HCT116 (cell line): ENCODE measurements at regions of chr3 and their contacts with region 1.

Region 1: DNA sequence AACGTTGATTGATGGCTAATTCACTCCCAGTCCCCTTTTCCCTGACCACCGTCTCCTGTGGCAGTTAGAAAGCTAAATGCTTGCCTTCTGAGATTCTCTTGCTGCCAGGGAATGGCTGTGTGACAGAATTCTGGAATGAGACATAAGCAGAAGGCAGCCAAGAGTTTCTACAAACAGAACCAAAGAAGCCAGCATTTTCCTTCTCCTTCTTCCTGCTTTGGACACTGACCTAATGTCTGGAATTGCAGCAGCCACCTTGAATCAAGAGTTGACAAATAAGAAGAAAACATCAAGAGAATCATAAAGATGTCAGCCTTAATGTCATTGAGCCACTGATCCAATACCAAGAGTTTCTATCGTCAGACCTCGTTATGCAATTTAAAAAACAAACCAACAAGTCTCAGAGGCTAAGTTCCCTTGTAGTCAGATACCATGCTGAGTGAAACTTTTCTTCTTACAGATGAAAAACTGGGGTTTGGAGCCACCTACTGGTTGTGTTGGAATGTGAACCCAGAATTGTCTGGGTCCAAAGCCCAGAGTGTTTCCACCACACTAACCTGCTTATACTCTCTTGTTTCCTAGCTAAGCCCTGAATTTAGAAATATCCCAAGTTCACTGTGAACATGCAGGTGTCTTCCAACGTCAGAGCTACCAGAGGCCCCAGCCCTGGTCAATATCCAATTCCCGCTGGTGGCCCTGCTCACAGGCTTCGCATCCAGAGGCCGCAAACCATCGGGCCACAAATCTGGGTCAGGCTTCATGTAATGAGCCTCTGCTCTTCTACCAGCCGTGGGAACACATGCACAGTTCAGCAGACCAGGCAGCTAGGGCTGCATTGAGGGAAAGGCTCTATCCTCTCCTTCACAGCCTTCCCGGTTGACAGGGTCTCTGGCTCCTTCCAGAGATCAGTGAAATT is 42.5 kb downstream of the MCF2L2 start:
- DNase-seq: peak; percentile 45
- ATAC-seq: peak; percentile 82
- H3K4me3 ChIP-seq: no peak overlapping the region
- H3K27ac ChIP-seq: no peak overlapping the region
- H3K4me1 ChIP-seq: no peaks in the 10 kb centered on the region
- H3K27me3 ChIP-seq: no peaks in the 10 kb centered on the region
- CTCF ChIP-seq: peak; percentile 62 to 84 (median 77); a peak in 5 of 6 replicates
- POLR2A ChIP-seq: no peak
- RAD21 ChIP-seq: peak; percentile 90

Region 2: GRCh38 chr3:182909318-182910040 is 476.5 kb before region 1 on chr3:
- CTCF ChIA-PET with region 1: interaction called, 3 read pairs
- POLR2A ChIA-PET with region 1: no interaction called
- RAD21 ChIA-PET with region 1: no interaction called
- intact Hi-C with region 1: loop called (anchors 10 kb)
- DNase-seq: no peak
- ATAC-seq: peak; percentile 68
- H3K4me3 ChIP-seq: no peak overlapping the region
- H3K27ac ChIP-seq: no peak overlapping the region
- H3K4me1 ChIP-seq: peaks cover 20 to 25% of the 10 kb centered on the region in 2 experiments
- H3K27me3 ChIP-seq: no peaks in the 10 kb centered on the region
- CTCF ChIP-seq: peak; percentile 39 to 65 (median 50); a peak in 5 of 6 replicates
- POLR2A ChIP-seq: no peak
- RAD21 ChIP-seq: peak; percentile 50

Region 3: GRCh38 chr3:183178629-183179549 is 207.1 kb before region 1 on chr3:
- CTCF ChIA-PET with region 1: interaction called, 251 read pairs
- POLR2A ChIA-PET with region 1: no interaction called
- RAD21 ChIA-PET with region 1: interaction called in 1 of 2 experiments, 9 read pairs
- intact Hi-C with region 1: loop called (anchors 1 kb)
- DNase-seq: no peak
- ATAC-seq: peak; percentile 86
- H3K4me3 ChIP-seq: peak overlapping the region; percentile 52 to 62
- H3K27ac ChIP-seq: no peak overlapping the region
- H3K4me1 ChIP-seq: peaks cover 6 to 10% of the 10 kb centered on the region in 2 experiments; a peak in 2 of 4 replicates
- H3K27me3 ChIP-seq: no peaks in the 10 kb centered on the region
- CTCF ChIP-seq: peak; percentile 23 to 38 (median 31); a peak in 3 of 6 replicates
- POLR2A ChIP-seq: no peak
- RAD21 ChIP-seq: peak; percentile 31; the same call in 1 of the 2 replicates

Region 4: GRCh38 chr3:183253902-183254833 is 131.8 kb before region 1 on chr3:
- CTCF ChIA-PET with region 1: interaction called, 6 read pairs
- POLR2A ChIA-PET with region 1: no interaction called
- RAD21 ChIA-PET with region 1: no interaction called
- intact Hi-C with region 1: loop called (anchors 2 kb)
- DNase-seq: no peak
- ATAC-seq: peak; percentile 53
- H3K4me3 ChIP-seq: peak overlapping the region; percentile 86 to 92
- H3K27ac ChIP-seq: peak overlapping the region; percentile 73
- H3K4me1 ChIP-seq: peaks cover 9 to 24% of the 10 kb centered on the region in 2 experiments; a peak in 3 of 4 replicates
- H3K27me3 ChIP-seq: no peaks in the 10 kb centered on the region
- CTCF ChIP-seq: no peak
- POLR2A ChIP-seq: no peak
- RAD21 ChIP-seq: peak; percentile 43